ENCODE measurements at regions of chr2 and their contacts with region 1.

Region 1: GRCh38 chr2:218406209-218406948 is 6.7 kb downstream of the CTDSP1 start:
- DNase-seq: peak; percentile 93
- ATAC-seq: peak; percentile 81
- H3K4me3 ChIP-seq: peak overlapping the region; percentile 15 to 72 (median 53)
- H3K4me3 Mint-ChIP-seq: peak overlapping the region; percentile 88
- H3K27ac ChIP-seq: peak overlapping the region; percentile 62 to 82
- H3K27ac Mint-ChIP-seq: peak overlapping the region; percentile 90
- H3K4me1 ChIP-seq: peaks cover 30 to 48% of the 10 kb centered on the region in 2 donors
- H3K4me1 Mint-ChIP-seq: peaks cover 47% of the 10 kb centered on the region
- H3K27me3 ChIP-seq: no peaks in the 10 kb centered on the region
- H3K27me3 Mint-ChIP-seq: no peaks in the 10 kb centered on the region
- CTCF ChIP-seq: peak; percentile 69

Region 2: GRCh38 chr2:218323809-218324521 is 82.4 kb before region 1 on chr2:
- CTCF ChIA-PET with region 1: no interaction called
- POLR2A ChIA-PET with region 1: no interaction called
- intact Hi-C with region 1: no loop called
- DNase-seq: peak; percentile 28
- ATAC-seq: no peak
- H3K4me3 ChIP-seq: peak overlapping the region in 4 of 5 experiments; percentile 31 to 63 (median 58)
- H3K4me3 Mint-ChIP-seq: peak overlapping the region; percentile 85
- H3K27ac ChIP-seq: no peak overlapping the region
- H3K27ac Mint-ChIP-seq: peak overlapping the region; percentile 50
- H3K4me1 ChIP-seq: peaks cover 35 to 40% of the 10 kb centered on the region in 2 donors
- H3K4me1 Mint-ChIP-seq: peaks cover 41% of the 10 kb centered on the region
- H3K27me3 ChIP-seq: peaks cover 0 to 11% (median 5%) of the 10 kb centered on the region in 4 experiments
- H3K27me3 Mint-ChIP-seq: no peaks in the 10 kb centered on the region
- CTCF ChIP-seq: no peak

Region 3: GRCh38 chr2:218466016-218466521 is 59.7 kb after region 1 on chr2:
- CTCF ChIA-PET with region 1: interaction called, 5 read pairs
- POLR2A ChIA-PET with region 1: no interaction called
- intact Hi-C with region 1: loop called (anchors 1 kb)
- DNase-seq: peak; percentile 30
- ATAC-seq: no peak
- H3K4me3 ChIP-seq: no peak overlapping the region
- H3K4me3 Mint-ChIP-seq: no peak overlapping the region
- H3K27ac ChIP-seq: no peak overlapping the region
- H3K27ac Mint-ChIP-seq: no peak overlapping the region
- H3K4me1 ChIP-seq: peaks cover 12 to 13% of the 10 kb centered on the region in 2 donors
- H3K4me1 Mint-ChIP-seq: peaks cover 17% of the 10 kb centered on the region
- H3K27me3 ChIP-seq: no peaks in the 10 kb centered on the region
- H3K27me3 Mint-ChIP-seq: no peaks in the 10 kb centered on the region
- CTCF ChIP-seq: peak; percentile 51

Region 4: GRCh38 chr2:218648088-218648786 is 241.9 kb after region 1 on chr2:
- CTCF ChIA-PET with region 1: interaction called, 3 read pairs
- POLR2A ChIA-PET with region 1: no interaction called
- intact Hi-C with region 1: loop called (anchors 1 kb)
- DNase-seq: peak; percentile 65
- ATAC-seq: peak; percentile 78
- H3K4me3 ChIP-seq: no peak overlapping the region
- H3K4me3 Mint-ChIP-seq: no peak overlapping the region
- H3K27ac ChIP-seq: peak overlapping the region in 1 of 2 donors; percentile 36
- H3K27ac Mint-ChIP-seq: peak overlapping the region; percentile 4
- H3K4me1 ChIP-seq: peaks cover 3 to 5% of the 10 kb centered on the region in 2 donors
- H3K4me1 Mint-ChIP-seq: peaks cover 6% of the 10 kb centered on the region
- H3K27me3 ChIP-seq: no peaks in the 10 kb centered on the region
- H3K27me3 Mint-ChIP-seq: no peaks in the 10 kb centered on the region
- CTCF ChIP-seq: peak; percentile 83

Measured in B cell (primary cell).